ENCODE measurements at regions of chr6 and their contacts with region 1.

Region 1: GRCh38 chr6:32952817-32953739 is at the start of gene HLA-DMA:
- DNase-seq: peak; percentile 95
- H3K4me3 ChIP-seq: peak within 1 kb of the TSS; percentile 75
- H3K27ac ChIP-seq: peak within 1 kb of the TSS; percentile 74
- H3K4me1 ChIP-seq: peaks cover 72% of the 10 kb centered on the region
- CTCF ChIP-seq: peak; percentile 92
- total RNA-seq, gene HLA-DMA: 175 and 207 TPM in 2 replicates

Region 2: DNA sequence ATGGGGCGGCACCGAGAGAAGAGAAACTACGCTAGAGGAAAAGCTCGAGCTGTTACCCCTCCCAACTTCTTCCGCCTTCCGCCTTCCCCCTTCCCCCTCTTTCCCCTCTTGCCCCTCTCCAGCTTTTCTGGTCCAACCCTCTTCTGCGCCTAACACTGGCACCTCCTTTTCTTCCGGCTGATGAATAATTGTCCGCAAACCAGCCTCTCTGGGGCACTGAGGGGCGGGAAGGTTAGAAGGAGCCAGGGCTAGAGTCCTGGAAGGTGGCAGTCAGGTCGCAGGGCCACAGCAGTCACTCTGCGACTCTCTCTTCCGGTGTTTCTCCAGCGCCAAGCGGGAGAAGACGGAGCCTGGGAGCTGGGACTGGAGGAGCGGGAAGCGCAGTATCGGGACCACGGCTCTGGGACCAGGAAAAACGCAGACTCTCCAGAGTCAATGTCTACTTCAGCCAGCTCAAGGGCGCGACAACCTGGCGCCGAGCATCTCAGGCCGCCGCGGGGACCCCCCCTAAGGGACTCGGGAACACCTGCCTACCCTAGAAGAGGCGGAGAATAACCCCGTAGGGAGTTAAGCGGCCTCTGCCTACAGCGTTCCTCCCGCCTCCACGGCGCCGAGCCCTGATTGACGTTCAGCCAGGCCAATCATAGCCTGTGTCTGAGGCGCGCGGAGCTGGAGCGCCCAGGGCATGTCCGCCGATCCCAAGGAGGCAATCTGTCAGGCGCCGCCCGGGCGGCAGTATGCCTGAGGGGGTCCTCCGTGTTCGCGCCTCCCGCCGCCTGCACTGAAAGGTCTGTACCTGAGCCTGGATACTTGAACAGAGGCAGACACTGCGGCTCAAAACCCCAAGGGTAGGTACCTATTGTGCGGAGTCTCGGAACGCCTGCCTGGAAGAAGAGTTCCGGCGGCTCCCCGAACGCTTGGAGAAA is 58.7 kb before region 1 on chr6:
- CTCF ChIA-PET with region 1: interaction called, 3 read pairs
- POLR2A ChIA-PET with region 1: interaction called, 19 read pairs
- intact Hi-C with region 1: no loop called
- DNase-seq: peak; percentile 97
- H3K4me3 ChIP-seq: peak overlapping the region; percentile 97
- H3K27ac ChIP-seq: peak overlapping the region; percentile 79
- H3K4me1 ChIP-seq: peaks cover 57% of the 10 kb centered on the region
- CTCF ChIP-seq: no peak

Region 3: GRCh38 chr6:32933636-32934085 is 19.4 kb before region 1 on chr6:
- CTCF ChIA-PET with region 1: interaction called, 12 read pairs
- POLR2A ChIA-PET with region 1: interaction called, 71 read pairs
- intact Hi-C with region 1: loop called (anchors 1 kb)
- DNase-seq: peak; percentile 77
- H3K4me3 ChIP-seq: no peak overlapping the region
- H3K27ac ChIP-seq: peak overlapping the region; percentile 34
- H3K4me1 ChIP-seq: peaks cover 37% of the 10 kb centered on the region
- CTCF ChIP-seq: peak; percentile 99

Region 4: GRCh38 chr6:32940656-32941213 is 12.3 kb before region 1 on chr6 and contains the start of gene HLA-DMB:
- CTCF ChIA-PET with region 1: interaction called, 6 read pairs
- POLR2A ChIA-PET with region 1: interaction called, 71 read pairs
- intact Hi-C with region 1: no loop called
- DNase-seq: peak; percentile 91
- H3K4me3 ChIP-seq: peak within 1 kb of the TSS; percentile 91
- H3K27ac ChIP-seq: peak within 1 kb of the TSS; percentile 99
- H3K4me1 ChIP-seq: peaks cover 68% of the 10 kb centered on the region
- CTCF ChIP-seq: no peak
- total RNA-seq, gene HLA-DMB: 85.1 and 98.0 TPM in 2 replicates

Region 5: DNA sequence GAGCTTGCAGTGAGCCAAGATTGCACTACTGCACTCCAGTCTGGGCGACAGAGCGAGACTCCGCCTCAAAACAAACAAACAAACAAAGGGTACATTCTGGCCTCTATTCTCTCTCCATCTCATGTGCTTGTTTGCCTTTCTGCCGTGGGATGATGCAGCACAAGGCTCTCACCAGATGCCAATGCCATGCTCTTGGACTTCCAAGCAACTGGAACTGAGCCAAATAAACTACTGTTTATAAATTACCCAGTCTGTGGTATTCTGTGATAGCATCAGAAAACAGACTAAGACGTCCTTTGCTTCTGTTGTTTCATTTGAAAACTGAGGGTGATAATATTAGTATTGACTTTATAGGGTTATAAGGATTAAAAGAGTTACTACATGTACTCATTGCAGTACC is 11.7 kb after region 1 on chr6:
- CTCF ChIA-PET with region 1: interaction called, 5 read pairs
- POLR2A ChIA-PET with region 1: interaction called, 203 read pairs
- intact Hi-C with region 1: loop called (anchors 1 kb)
- DNase-seq: no peak
- H3K4me3 ChIP-seq: no peak overlapping the region
- H3K27ac ChIP-seq: no peak overlapping the region
- H3K4me1 ChIP-seq: peaks cover 40% of the 10 kb centered on the region
- CTCF ChIP-seq: no peak

Region 6: GRCh38 chr6:32984605-32985389 is 31.7 kb after region 1 on chr6:
- CTCF ChIA-PET with region 1: interaction called, 14 read pairs
- POLR2A ChIA-PET with region 1: interaction called, 24 read pairs
- intact Hi-C with region 1: loop called (anchors 1 kb)
- DNase-seq: peak; percentile 93
- H3K4me3 ChIP-seq: no peak overlapping the region
- H3K27ac ChIP-seq: peak overlapping the region; percentile 55
- H3K4me1 ChIP-seq: peaks cover 40% of the 10 kb centered on the region
- CTCF ChIP-seq: peak; percentile 97

Measured in OCI-LY7 (cell line).